Common myeloid progenitor, CD34-positive (primary cell): ENCODE measurements at regions of chr16 and their contacts with region 1.

Region 1: GRCh38 chr16:50719518-50720337 is 22.2 kb upstream of the CYLD start:
- DNase-seq: peak in 2 of 3 donors; percentile 65 to 75
- H3K4me3 ChIP-seq: no peak overlapping the region
- H3K27ac ChIP-seq: no peak overlapping the region
- H3K4me1 ChIP-seq: peaks cover 23 to 70% (median 43%) of the 10 kb centered on the region in 4 experiments
- H3K27me3 ChIP-seq: no peaks in the 10 kb centered on the region

Region 2: DNA sequence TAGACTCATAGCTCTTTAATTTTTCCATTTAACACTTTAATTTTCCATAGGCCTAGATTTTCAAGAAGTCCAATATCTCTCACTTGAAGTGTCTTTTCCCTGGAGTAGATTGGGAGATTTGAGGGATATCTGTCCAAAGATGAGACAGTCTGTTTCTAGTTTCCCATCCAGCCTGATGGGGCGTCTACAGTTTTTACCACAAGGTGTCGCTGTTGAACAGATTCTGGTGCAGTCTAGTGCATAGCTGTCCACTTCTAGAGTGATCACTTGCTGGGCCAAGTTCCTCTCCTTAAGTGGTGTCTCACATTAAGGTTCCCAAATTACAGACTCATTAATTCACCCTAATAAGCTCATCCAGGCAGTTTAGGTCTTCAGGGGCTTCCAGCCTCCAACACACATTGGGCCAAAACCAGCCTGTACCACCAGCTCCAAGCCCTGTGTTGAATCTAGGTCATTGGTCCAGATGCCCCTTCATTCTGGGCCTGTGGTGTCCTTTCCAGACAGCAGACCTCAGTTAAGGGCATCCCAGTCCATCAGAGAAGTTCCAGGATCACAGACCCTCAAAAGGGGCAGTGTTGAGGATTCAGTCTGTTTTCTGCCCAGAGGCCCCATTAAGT is 48.0 kb before region 1 on chr16:
- CTCF ChIA-PET with region 1: interaction called, 76 read pairs
- POLR2A ChIA-PET with region 1: no interaction called
- DNase-seq: peak; percentile 66 to 80 (median 74)
- H3K4me3 ChIP-seq: no peak overlapping the region
- H3K27ac ChIP-seq: no peak overlapping the region
- H3K4me1 ChIP-seq: peaks cover 8 to 36% (median 34%) of the 10 kb centered on the region in 4 experiments
- H3K27me3 ChIP-seq: no peaks in the 10 kb centered on the region

Region 3: DNA sequence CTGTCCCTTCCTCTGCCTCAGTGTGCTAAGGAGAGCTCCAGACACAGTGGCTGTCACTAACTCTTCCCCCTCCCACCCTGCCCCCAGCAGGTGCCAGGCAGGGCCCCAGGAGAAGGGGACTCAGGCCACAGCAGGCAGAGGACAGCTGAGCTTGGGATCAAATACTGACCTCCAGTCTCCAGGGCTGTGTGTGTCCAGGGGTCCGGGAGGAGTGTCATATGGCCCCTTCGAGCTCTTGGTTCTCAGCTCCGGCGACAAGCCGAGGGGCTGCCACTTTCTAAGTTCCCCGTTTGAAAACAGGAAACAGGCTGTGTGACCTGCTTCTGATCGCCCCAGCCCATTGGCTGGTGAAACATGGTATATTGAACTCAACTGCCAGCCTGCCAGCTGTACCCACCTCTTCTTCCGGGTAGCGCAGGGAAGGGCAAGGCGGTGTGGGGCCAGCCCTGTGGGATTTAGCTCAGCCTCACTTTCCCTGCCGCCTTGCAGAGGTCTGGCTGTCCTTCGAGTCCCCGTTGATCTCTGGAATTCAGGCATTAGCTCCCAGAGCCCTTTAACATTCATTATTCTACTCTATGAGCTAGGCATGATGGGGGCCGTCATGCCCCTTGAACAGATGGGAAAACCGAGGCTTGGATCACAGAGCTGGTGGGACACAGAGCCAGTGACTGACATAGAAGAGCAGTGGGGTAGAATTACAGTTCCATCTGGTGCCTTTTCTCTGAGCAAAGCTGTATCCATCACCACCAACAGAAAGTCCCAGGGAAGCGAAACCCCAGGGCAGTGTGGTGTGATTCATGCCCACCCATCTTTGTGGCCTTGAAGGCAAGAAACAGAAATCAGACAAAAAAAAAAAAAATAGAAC is 38.5 kb before region 1 on chr16 and contains the start of gene SNX20:
- CTCF ChIA-PET with region 1: interaction called, 10 read pairs
- POLR2A ChIA-PET with region 1: interaction called, 4 read pairs
- DNase-seq: peak; percentile 53 to 86 (median 80)
- H3K4me3 ChIP-seq: peak within 1 kb of the TSS; percentile 34 to 91 (median 83)
- H3K27ac ChIP-seq: peak within 1 kb of the TSS; percentile 83 to 89
- H3K4me1 ChIP-seq: peaks cover 39 to 80% (median 74%) of the 10 kb centered on the region in 4 experiments
- H3K27me3 ChIP-seq: no peaks in the 10 kb centered on the region

Region 4: DNA sequence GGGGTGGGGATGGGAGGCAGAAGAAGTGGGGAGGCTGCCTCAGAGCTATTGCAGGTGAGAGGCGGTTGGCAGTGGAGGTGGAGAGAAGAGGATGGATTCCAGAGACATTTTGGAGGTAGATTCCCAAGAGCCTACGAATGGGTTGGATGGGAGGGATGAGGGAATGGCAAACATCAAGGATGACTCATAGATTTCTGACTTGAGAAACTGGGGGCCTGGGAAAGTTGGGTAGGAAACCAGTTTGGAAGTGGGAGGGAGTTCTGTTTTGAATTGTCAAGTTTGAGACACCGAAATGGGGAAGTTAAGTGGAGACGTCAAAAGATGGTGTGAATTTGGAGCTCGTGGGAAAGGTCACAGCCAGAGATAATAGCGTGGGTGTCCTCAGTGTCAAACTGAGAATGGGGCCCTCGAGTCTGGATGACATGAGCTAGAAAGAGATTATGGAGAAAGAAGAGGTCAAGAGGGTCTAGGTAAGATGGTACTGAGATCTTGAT is 15.9 kb after region 1 on chr16:
- CTCF ChIA-PET with region 1: interaction called, 12 read pairs
- POLR2A ChIA-PET with region 1: no interaction called
- DNase-seq: peak in 1 of 3 donors; percentile 37
- H3K4me3 ChIP-seq: no peak overlapping the region
- H3K27ac ChIP-seq: no peak overlapping the region
- H3K4me1 ChIP-seq: peaks cover 0 to 13% (median 9%) of the 10 kb centered on the region in 4 experiments
- H3K27me3 ChIP-seq: no peaks in the 10 kb centered on the region

Region 5: GRCh38 chr16:50747207-50747956 is 27.7 kb after region 1 on chr16:
- CTCF ChIA-PET with region 1: interaction called, 16 read pairs
- POLR2A ChIA-PET with region 1: no interaction called
- DNase-seq: peak; percentile 68 to 81 (median 79)
- H3K4me3 ChIP-seq: peak overlapping the region in 5 of 7 experiments; percentile 5 to 61 (median 37)
- H3K27ac ChIP-seq: peak overlapping the region in 1 of 2 experiments; percentile 68
- H3K4me1 ChIP-seq: peaks cover 41 to 66% (median 48%) of the 10 kb centered on the region in 4 experiments
- H3K27me3 ChIP-seq: no peaks in the 10 kb centered on the region